GM12878 (cell line): ENCODE measurements at regions of chr13 and their contacts with region 1.

Region 1: DNA sequence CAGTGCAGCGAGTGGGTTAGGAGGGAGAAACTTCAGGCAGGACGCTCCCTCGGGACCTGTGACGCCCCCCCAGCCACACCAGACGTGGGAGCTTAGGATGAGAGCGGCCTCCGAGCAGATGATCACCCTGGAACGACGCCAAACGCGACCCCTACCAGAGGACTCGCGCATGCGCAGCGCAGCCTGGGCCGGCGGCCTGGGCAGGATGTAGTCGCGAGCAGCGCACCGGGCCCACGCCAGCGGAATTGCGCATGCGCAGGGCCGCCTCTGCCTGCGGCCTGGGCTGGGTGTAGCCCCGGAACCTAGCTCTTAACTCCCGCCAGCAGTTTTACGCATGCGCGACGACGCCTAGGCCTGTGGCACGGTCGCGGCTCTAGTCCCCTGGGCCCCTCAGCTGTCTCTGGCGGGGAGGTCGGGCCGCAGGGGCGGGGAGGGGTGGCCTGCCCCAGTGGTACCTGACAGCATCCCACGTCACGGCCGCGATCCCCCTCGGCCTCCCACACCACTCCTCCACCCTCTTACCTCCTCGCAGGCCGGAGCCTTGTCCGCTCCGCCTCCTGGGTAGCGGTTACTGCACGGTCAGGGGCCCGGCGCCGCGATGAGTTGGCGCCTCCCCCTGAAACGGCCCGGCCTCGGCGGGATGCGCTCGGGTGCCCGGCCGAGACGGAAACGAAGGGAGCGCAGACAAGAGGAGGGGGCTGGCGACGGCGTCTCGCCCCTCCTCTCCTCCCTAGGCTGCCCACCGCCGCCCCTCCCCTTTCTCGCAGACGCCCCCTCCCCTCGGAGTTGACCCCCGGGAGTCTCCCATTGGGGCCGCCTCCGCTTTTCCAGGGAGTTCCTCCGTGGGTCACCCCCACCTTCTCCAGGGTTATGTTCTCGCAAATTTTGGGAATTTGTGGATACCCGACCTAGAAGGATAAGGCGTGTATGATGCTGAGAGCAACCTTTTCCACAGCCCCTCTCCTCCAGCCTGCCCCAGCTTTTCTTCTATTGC is at the start of gene RCBTB2:
- DNase-seq: peak; percentile 95
- ATAC-seq: peak; percentile 90
- H3K4me3 ChIP-seq: peak within 1 kb of the TSS; percentile 77
- H3K27ac ChIP-seq: peak within 1 kb of the TSS; percentile 93
- H3K4me1 ChIP-seq: peaks cover 29% of the 10 kb centered on the region
- H3K27me3 ChIP-seq: no peaks in the 10 kb centered on the region
- CTCF ChIP-seq: no peak
- EP300 ChIP-seq: no peak
- POLR2A ChIP-seq: peak; percentile 90
- RAD21 ChIP-seq: no peak
- polyA plus RNA-seq, gene RCBTB2: 8.7 to 10.4 TPM

Region 2: DNA sequence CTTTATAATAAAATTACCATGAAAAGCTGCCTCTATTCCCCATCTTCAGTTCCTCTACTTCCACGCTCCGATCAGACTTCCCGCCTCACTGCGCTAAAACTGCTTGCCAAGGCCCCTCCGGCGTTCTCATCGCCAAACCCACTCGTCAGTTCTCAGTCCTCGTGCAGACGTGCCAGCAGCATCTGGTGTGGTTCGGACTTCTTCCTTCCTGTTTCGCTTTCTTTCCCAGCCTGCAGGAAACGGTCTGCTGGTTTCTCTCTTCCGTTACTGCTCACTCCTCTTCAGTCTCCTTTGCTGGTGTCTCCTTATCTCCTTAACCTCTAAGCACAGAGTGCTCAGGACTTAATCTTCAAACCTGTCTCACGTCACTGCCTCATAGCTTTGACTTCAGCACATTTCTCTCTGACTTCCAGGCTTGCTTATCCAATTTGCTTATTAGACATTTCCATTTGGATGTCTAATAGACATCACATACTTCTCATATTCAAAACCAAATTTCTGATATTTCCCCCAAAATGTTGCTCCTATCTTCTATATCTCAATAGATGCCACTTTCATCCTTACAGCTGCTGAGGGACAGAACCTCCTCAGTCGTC is 40.2 kb before region 1 on chr13:
- CTCF ChIA-PET with region 1: interaction called, 5 read pairs
- POLR2A ChIA-PET with region 1: interaction called, 3 read pairs
- RAD21 ChIA-PET with region 1: interaction called, 10 read pairs
- SMC1A ChIA-PET with region 1: interaction called, 6 read pairs
- in situ Hi-C with region 1: no loop called
- intact Hi-C with region 1: loop called (anchors 1 kb)
- DNase-seq: peak; percentile 98
- ATAC-seq: peak; percentile 88
- H3K4me3 ChIP-seq: peak overlapping the region; percentile 66; the same call in 1 of the 2 replicates
- H3K27ac ChIP-seq: peak overlapping the region; percentile 91
- H3K4me1 ChIP-seq: peaks cover 72% of the 10 kb centered on the region
- H3K27me3 ChIP-seq: no peaks in the 10 kb centered on the region
- CTCF ChIP-seq: no peak
- EP300 ChIP-seq: peak in 1 of 2 experiments; percentile 45; a peak in 1 of 4 replicates
- POLR2A ChIP-seq: peak; percentile 77
- RAD21 ChIP-seq: no peak

Region 3: GRCh38 chr13:48505597-48506091 is 27.2 kb before region 1 on chr13:
- CTCF ChIA-PET with region 1: interaction called, 4 read pairs
- POLR2A ChIA-PET with region 1: interaction called, 3 read pairs
- RAD21 ChIA-PET with region 1: interaction called, 3 read pairs
- SMC1A ChIA-PET with region 1: interaction called, 8 read pairs
- in situ Hi-C with region 1: no loop called
- intact Hi-C with region 1: loop called (anchors 2 kb)
- DNase-seq: peak; percentile 93
- ATAC-seq: peak; percentile 91
- H3K4me3 ChIP-seq: peak overlapping the region; percentile 36
- H3K27ac ChIP-seq: peak overlapping the region; percentile 85
- H3K4me1 ChIP-seq: peaks cover 61% of the 10 kb centered on the region
- H3K27me3 ChIP-seq: no peaks in the 10 kb centered on the region
- CTCF ChIP-seq: no peak
- EP300 ChIP-seq: peak; percentile 75 to 90; a peak in 2 of 4 replicates
- POLR2A ChIP-seq: no peak
- RAD21 ChIP-seq: 0 out of 2 replicates have a peak, but pooled peaks have one; percentile 11